Left cardiac atrium (tissue), 4 donors: ENCODE measurements at regions of chr2 and their contacts with region 1.

Region 1: DNA sequence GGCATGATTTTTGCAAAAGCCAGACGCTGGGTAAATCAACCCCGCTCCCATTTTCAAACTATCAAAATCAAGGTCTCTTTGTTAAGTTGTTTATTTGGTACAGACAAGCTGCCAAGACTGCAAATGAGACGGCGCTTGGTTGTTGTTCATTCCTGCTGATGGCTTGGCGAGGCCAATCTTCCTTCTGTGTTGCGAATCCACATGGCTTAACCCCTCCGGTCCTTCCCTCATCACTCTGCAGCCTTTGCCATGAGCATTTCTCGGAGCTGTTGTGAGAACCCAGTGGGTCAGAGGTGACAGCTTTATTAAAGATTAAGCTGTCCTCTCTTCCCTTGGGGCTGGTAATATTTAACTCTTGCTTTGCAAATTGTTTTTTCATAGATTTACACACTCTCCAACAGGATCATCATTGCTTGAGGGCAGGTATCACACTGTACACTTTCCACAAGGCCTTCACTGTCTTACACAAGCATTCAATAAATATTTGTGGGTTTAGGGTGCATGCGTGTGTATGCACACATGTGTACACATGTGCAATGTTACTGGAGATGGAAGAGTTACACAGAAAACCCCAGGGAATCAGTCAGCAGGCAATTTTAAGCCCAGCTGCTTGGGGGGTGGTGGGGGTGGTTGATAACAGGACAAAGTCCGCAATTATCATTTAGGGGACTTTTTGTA is 27.8 kb upstream of the KCNF1 start:
- DNase-seq: no peak
- ATAC-seq: peak in 1 of 2 donors; percentile 19

Region 2: GRCh38 chr2:9867881-9868280 is 1016.1 kb before region 1 on chr2:
- intact Hi-C with region 1: no loop called
- DNase-seq: no peak
- ATAC-seq: no peak

Region 3: DNA sequence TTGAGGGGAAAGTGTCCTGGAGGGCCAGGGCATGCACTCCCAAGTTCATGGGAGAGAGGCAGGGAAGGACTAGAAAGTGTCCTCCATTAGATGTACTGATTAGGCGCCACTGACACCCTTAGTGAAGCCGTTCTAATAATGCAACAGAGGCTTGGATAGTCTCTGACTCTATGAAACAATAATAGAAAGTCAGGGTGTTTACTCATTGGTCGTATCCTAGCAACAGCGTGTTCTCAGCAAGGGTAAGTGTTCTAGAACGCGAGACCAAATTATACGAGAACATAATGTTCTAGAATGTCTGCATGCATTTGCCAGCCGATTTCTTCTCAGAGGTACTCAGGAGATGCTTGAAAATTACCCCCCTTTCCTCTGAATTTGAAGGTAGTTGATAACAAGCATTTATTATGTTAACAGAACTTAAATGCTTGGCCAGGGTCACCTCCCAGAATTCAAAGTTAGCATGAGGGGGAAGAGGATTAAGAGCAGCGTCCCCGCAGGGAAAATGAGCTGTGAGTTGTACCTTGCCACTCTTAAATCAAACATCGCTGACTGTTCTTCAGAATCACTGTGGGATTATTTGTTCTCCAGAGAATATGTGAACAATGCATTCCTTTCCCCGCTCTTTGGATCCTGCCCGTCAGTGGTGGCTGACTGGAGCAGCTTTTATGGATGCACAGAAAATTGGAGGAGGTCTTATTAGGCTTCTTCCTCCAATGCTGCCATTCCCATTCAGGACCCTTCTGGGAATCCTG is 37.7 kb before region 1 on chr2:
- intact Hi-C with region 1: loop called in 1 of 2 experiments (anchors 5 kb)
- DNase-seq: no peak
- ATAC-seq: peak; percentile 24 to 46

Region 4: DNA sequence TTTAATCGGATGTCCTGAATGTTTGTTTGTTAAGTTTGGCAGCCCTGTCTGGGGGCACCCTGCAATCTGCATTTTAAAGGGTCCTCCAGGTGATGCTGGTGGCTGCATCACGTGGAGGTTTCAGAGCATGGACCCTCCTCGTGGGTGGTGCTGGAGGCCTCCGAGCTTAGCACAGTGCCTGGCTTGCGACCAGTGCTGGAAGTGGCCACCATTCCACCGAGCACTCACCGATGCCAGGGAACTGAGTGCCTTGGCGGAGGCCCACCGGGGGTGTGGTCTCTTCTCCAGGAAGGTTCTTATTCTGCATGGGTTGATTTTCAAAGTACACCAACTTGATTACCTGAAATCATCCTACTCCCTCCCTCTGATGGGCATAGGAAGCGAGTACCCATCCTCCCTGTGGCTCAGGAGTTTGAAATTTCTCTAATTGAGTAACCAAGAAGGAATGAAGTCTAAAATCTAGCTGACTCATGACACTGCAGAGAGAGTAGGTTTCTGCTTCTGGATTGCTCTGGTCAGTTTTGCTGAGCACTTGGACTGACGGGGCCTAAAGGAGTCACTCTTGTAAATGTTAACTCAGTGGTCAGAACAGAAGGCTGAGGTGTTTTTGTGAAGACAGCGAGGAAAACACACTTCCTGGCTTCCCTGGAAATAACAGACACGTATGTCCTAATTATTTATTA is 213.2 kb after region 1 on chr2:
- intact Hi-C with region 1: no loop called
- DNase-seq: no peak
- ATAC-seq: peak; percentile 18 to 44